ENCODE measurements at regions of chr11 and their contacts with region 1.

Region 1: GRCh38 chr11:94504689-94505293 is 7.5 kb upstream of the C11orf97 start:
- DNase-seq: no peak
- H3K4me3 ChIP-seq: no peak overlapping the region
- H3K27ac ChIP-seq: no peak overlapping the region
- H3K4me1 ChIP-seq: no peaks in the 10 kb centered on the region
- H3K27me3 ChIP-seq: no peaks in the 10 kb centered on the region
- CTCF ChIP-seq: peak in 5 of 6 experiments; percentile 41 to 76 (median 69)
- POLR2A ChIP-seq: no peak

Region 2: DNA sequence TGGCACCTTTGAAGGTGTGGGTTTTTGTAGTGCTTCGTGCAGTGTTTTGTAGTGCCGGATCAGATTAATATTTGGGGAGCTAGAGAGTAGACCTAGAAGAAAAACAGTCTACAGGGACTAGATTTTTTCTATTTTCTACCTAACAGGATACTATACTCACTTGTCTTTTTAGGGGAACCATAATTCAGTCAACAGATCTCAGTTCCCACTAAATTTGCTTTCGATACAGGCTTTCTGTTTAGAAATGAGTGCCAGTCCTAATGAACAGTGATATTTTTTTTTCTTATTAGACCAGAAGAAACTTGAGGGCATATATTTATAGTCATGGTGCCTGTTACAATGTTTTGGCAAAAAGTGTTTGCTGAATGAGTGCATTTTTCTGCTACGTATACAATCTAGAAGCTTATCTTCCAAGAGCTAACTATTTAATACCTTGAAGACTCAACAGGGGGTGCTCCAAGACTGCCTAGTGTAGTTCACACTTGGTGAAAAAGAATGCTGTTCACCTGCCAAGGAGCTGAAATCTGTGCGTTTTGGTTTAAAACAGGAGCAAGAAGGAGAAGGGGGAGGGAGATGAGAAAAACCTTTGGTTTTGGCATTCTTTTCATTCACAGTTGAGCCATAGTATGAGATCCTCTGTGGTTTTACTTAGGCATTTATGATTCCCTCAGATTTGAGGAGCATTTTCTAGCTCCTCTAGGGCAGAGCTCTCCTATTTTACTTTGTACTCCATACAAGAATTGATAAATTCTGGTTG is 609.5 kb before region 1 on chr11:
- intact Hi-C with region 1: loop called (anchors 5 kb)
- DNase-seq: peak; percentile 33 to 44
- H3K4me3 ChIP-seq: no peak overlapping the region
- H3K27ac ChIP-seq: no peak overlapping the region
- H3K4me1 ChIP-seq: no peaks in the 10 kb centered on the region
- H3K27me3 ChIP-seq: no peaks in the 10 kb centered on the region
- CTCF ChIP-seq: peak; percentile 59 to 89 (median 76)
- POLR2A ChIP-seq: no peak

Measured in thyroid gland (tissue), 4 donors.